Posterior vena cava (tissue), 2 donors: ENCODE measurements at regions of chr18 and their contacts with region 1.

Region 1: DNA sequence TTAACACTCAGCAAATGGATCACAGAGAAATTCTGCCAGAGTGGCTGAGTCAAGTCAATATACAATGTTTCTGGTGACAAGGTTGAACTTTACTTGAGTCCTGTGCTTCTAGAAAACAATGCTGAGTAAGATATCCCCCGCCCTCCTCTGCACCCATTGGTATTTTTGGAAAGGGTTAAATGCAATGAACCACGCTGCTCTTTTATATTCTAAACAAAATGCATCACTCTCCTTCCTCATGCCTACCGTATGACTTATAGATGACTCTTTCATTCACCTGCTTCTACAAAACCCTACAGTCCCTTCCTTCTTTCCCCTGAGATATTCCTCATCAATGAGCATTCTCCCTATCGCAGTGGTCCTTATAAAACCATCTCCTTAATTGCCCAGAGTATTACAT is 168.8 kb downstream of the TXNL1 start:
- DNase-seq: no peak

Region 2: DNA sequence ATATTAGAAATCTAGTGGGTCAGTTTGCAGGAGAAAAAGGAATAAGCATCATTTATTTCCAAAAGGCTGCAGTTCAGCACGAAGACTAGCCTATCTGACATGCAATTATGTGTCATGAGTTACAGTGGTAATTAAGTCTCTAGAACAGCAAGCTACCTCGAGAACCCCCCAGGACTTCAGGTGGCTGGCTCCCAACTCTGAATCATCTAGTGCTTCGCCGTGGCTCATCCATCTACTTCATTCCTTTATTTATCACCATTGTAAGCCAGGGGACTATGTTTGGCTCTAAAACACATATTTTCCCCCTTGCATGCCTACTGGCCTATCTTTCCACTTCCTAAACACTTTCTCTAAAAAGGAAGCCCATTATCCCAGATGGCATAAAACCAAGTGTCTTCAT is 47.2 kb after region 1 on chr18:
- intact Hi-C with region 1: loop called in 1 of 2 experiments (anchors 1 kb)
- DNase-seq: no peak

Region 3: GRCh38 chr18:56748698-56749268 is 279.2 kb after region 1 on chr18:
- intact Hi-C with region 1: no loop called
- DNase-seq: no peak

Region 4: DNA sequence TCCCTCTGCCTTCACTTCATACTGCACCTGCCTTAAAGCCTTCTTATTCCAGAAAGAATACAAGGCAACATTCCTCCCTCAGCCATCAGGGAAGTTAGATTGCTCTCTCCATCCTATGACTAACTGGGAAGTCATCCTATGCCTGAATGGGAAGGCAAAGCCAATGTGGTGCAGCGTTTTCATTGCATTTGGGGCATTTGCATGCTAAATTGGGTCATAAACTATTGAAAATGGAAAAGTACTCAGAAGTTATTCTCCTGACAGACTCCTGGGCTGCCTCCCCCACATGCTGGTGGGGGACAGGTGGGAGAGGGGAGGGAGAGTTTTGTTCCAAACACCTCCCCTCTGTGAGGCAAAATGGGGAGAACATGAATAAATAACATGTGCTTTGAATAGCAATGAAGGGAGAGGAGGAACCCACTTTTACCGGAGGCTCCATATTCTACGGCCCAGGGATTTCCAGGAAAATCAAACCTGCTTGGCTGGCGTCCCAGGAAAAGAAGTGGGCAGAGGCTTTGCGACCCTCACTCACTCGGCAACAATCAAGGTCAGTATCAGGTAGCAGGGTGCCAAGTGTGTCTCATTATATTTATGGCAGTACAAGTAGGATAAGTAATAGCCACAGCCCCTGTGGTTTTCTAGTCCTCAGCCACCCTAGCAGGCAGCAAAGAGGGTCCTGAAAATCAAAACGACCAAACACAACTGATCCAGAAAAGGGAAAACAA is 761.4 kb after region 1 on chr18:
- intact Hi-C with region 1: no loop called
- DNase-seq: no peak